ENCODE measurements at regions of chr19 and their contacts with region 1.

Region 1: GRCh38 chr19:15264061-15264932 is 32.0 kb upstream of the EPHX3 start:
- DNase-seq: peak; percentile 56 to 93 (median 79)

Region 2: GRCh38 chr19:15288146-15288963 is 24.1 kb after region 1 on chr19:
- intact Hi-C with region 1: loop called (anchors 1 kb)
- DNase-seq: peak; percentile 75 to 95 (median 90)

Region 3: GRCh38 chr19:15332311-15332996 is 68.2 kb after region 1 on chr19 and contains the start of gene BRD4:
- intact Hi-C with region 1: loop called (anchors 5 kb)
- DNase-seq: peak; percentile 16 to 88 (median 76)

Region 4: DNA sequence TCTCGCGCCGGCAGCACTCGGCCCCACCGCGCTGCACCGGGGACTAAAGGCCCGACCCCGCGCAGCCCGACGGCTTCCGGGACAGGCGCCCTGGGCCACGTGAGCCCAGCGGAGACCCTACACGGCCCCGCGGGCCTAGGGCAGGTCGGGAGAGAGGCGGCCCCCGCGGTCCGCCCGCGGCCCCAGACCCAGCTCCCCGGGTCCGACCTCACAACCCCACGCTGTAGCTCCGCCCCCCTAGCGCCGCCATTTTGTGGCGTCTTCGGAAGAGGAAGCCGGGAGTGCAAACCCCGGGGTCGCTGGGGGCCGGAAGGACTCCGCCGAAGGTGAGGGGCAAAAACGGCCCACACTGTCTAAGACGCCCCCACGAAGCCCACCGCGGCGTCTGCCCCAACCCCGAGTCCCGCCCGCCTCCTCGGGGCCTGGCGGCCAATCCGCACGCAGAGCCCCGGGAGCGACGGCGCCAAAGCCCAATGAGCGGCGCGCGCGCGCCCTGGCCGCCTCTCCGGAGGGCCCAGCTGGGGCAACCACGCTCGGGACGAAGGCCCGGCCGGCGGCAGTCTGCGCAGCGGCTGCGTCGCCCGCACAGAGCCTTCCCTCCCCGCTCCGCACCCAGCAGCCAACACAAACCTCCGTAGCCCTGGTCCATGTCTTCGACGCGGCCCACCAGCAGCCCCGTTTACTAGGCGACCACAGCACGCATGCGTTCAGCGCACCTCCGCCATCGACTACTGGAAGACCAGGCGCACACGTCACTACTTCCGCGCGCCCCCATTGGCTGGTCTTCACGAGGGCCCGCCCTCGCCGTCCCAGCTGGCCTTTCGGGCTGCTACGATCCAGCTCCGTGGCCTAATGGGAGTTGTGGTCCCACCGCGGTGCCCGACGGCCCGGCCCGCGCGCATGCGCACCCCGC is 115.0 kb after region 1 on chr19 and contains the start of gene AKAP8:
- intact Hi-C with region 1: loop called (anchors 5 kb)
- DNase-seq: peak; percentile 96 to 99 (median 98)

Region 5: GRCh38 chr19:15418588-15419412 is 154.5 kb after region 1 on chr19 and contains the start of gene AKAP8L:
- intact Hi-C with region 1: loop called (anchors 10 kb)
- DNase-seq: peak; percentile 91 to 100 (median 97)

Measured in head of caudate nucleus (tissue), 42 donors.